Heart left ventricle (tissue), 16 donors: ENCODE measurements at regions of chr9 and their contacts with region 1.

Region 1: DNA sequence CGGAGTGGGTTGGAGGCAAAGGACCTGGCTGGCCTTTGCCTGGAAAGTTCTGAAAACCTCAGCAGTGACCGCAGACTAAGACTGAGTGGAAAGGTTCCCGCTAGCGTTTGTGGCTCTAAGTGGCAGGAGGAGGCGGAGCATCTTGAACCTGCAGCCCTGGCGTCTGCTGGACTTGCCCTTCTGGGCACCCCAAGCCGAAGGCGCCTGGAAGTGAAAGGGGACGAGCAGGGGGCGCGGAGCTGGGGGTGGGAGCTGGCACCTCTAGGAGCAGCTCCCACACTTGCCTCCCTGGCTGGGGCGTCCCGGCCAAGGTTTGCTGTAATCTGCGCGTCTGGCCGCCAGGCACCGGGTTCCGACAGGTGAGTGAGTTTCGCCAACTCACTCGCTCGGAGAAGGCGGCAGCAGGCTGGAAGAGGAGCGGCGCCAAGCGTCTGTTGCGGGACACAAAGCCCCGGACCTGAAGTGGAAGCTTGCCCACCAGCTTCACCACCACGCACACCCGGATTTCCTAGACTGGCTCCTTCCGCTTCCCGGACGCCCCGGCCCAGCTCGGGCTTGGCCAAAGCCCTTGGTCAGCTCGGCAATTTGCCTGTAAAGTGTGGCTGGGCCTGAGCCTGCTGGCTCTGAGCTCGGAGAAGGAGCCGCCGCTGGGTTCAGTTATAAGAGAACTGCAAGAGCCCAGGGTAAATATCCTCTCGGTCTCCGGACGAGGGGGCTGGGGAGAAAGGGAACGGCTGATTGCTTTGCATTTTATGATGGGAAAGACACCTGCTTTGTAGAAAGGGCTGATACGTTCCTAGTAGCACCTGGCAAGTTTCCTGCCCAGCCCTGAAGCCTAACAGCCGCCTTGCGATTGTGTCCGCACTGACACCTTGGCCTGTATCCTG is at the start of gene GNA14:
- DNase-seq: peak; percentile 63 to 85 (median 69)
- ATAC-seq: peak; percentile 34 to 87 (median 82)
- H3K4me3 ChIP-seq: peak within 1 kb of the TSS; percentile 41 to 77 (median 56)
- H3K27ac ChIP-seq: peak within 1 kb of the TSS in 11 of 12 donors; percentile 23 to 79 (median 61)
- H3K4me1 ChIP-seq: peaks cover 0 to 26% (median 9%) of the 10 kb centered on the region in 12 donors
- H3K27me3 ChIP-seq: peaks cover 0 to 26% (median 0%) of the 10 kb centered on the region in 9 donors
- CTCF ChIP-seq: peak in 2 of 12 donors; percentile 10 to 11
- POLR2A ChIP-seq: no peak
- total RNA-seq, gene GNA14: 0.53 to 6.5 (median 1.4) TPM

Region 2: DNA sequence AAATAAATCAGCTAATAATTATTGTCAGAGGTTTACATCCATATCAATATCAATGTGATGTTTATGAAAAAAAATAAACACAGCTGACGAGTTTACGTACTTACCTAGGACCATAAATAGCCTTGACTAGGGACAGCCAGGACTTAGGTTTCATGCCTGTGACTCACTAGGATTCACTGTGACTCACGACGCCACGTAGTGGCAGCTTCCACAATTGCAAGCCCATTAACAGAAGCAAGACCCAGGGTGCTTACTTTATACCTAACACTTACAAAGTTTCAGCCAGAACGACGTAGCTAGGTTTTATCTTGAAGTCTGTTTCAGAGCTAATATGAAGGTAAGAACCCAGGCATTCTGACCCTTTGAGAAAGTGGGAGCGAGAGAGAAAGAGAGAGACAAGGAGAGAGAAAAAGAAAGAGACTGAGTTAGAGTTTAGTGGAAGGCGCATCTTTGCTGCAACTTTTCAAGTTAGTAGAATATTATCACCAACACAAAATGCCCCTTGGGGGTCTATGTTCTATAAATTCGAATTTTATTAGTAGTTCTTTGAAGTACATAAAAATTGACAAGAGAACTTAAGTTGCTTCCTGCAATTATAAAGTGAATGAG is 191.5 kb before region 1 on chr9:
- intact Hi-C with region 1: loop called (anchors 2 to 10 kb)
- DNase-seq: peak; percentile 64 to 85 (median 80)
- ATAC-seq: peak; percentile 32 to 88 (median 82)
- H3K4me3 ChIP-seq: no peak overlapping the region
- H3K27ac ChIP-seq: no peak overlapping the region
- H3K4me1 ChIP-seq: peaks cover 0 to 17% (median 1%) of the 10 kb centered on the region in 12 donors
- H3K27me3 ChIP-seq: no peaks in the 10 kb centered on the region
- CTCF ChIP-seq: peak; percentile 78 to 95 (median 84)
- POLR2A ChIP-seq: no peak

Region 3: GRCh38 chr9:77475641-77476473 is 172.6 kb before region 1 on chr9:
- intact Hi-C with region 1: loop called in 1 of 10 experiments (anchors 5 kb)
- DNase-seq: peak in 2 of 5 donors; percentile 31 to 33
- ATAC-seq: peak in 3 of 4 donors; percentile 76 to 92 (median 86)
- H3K4me3 ChIP-seq: no peak overlapping the region
- H3K27ac ChIP-seq: peak overlapping the region in 8 of 12 donors; percentile 4 to 64 (median 45)
- H3K4me1 ChIP-seq: peaks cover 0 to 10% (median 2%) of the 10 kb centered on the region in 12 donors
- H3K27me3 ChIP-seq: no peaks in the 10 kb centered on the region
- CTCF ChIP-seq: no peak
- POLR2A ChIP-seq: no peak

Region 4: GRCh38 chr9:77569173-77569734 is 79.2 kb before region 1 on chr9:
- intact Hi-C with region 1: loop called in 1 of 10 experiments (anchors 10 kb)
- DNase-seq: no peak
- ATAC-seq: no peak
- H3K4me3 ChIP-seq: no peak overlapping the region
- H3K27ac ChIP-seq: no peak overlapping the region
- H3K4me1 ChIP-seq: no peaks in the 10 kb centered on the region
- H3K27me3 ChIP-seq: no peaks in the 10 kb centered on the region
- CTCF ChIP-seq: no peak
- POLR2A ChIP-seq: no peak

Region 5: GRCh38 chr9:77605449-77606220 is 42.8 kb before region 1 on chr9:
- intact Hi-C with region 1: loop called in 3 of 10 experiments (anchors 5 kb)
- DNase-seq: no peak
- ATAC-seq: no peak
- H3K4me3 ChIP-seq: no peak overlapping the region
- H3K27ac ChIP-seq: peak overlapping the region; percentile 10 to 82 (median 54)
- H3K4me1 ChIP-seq: peaks cover 0 to 19% (median 5%) of the 10 kb centered on the region in 12 donors
- H3K27me3 ChIP-seq: no peaks in the 10 kb centered on the region
- CTCF ChIP-seq: no peak
- POLR2A ChIP-seq: no peak

Region 6: DNA sequence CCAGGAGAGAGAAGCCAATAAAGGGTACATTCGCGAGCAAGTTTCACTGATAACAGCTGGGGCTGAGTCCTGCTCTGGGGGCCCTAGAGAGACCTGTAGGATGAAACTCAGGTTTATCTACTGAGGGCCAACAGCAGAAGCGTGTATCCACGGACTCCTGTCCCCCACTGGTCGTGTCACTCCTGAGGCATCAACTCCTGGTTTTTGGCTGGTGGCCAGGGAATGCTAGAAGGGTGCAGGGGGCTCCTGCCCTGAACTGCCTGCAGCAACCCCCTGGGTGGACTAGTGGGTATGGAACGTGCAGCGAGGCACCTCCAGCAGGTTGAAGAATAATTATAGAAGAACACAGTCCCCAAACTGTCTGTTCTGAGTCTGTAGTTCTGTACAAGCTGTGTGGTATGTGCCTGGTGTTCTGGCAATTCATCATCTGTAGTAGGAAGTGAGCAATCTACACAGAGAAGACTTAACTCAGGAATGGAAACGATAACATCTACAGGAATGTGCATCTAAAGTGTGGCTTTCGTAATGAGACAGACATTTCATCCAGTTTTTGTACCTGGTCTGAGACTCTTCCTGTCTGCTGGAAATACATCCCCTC is 64.2 kb after region 1 on chr9:
- intact Hi-C with region 1: loop called in 1 of 10 experiments (anchors 10 kb)
- DNase-seq: no peak
- ATAC-seq: no peak
- H3K4me3 ChIP-seq: no peak overlapping the region
- H3K27ac ChIP-seq: no peak overlapping the region
- H3K4me1 ChIP-seq: peaks cover 0 to 26% (median 0%) of the 10 kb centered on the region in 12 donors
- H3K27me3 ChIP-seq: no peaks in the 10 kb centered on the region
- CTCF ChIP-seq: no peak
- POLR2A ChIP-seq: no peak

Region 7: GRCh38 chr9:77827104-77827784 is 178.8 kb after region 1 on chr9:
- intact Hi-C with region 1: no loop called
- DNase-seq: no peak
- ATAC-seq: no peak
- H3K4me3 ChIP-seq: no peak overlapping the region
- H3K27ac ChIP-seq: no peak overlapping the region
- H3K4me1 ChIP-seq: peaks cover 0 to 57% (median 13%) of the 10 kb centered on the region in 12 donors
- H3K27me3 ChIP-seq: no peaks in the 10 kb centered on the region
- CTCF ChIP-seq: no peak
- POLR2A ChIP-seq: no peak